ENCODE measurements at regions of chr1 and their contacts with region 1.

Region 1: GRCh38 chr1:2429780-2430591 is 17.6 kb upstream of the PEX10 start:
- ATAC-seq: peak in 1 of 8 experiments; percentile 34
- H3K4me3 ChIP-seq: no peak overlapping the region
- H3K27ac ChIP-seq: no peak overlapping the region
- H3K4me1 ChIP-seq: peaks cover 57 to 60% of the 10 kb centered on the region in 2 donors

Region 2: GRCh38 chr1:1906185-1907097 is 523.5 kb before region 1 on chr1:
- in situ Hi-C with region 1: no loop called
- ATAC-seq: peak; percentile 62 to 86 (median 76)
- H3K4me3 ChIP-seq: no peak overlapping the region
- H3K27ac ChIP-seq: peak overlapping the region; percentile 68 to 82
- H3K4me1 ChIP-seq: peaks cover 27 to 31% of the 10 kb centered on the region in 2 donors

Region 3: GRCh38 chr1:2545759-2546514 is 116.0 kb after region 1 on chr1:
- in situ Hi-C with region 1: loop called in 2 of 9 experiments (anchors 10 to 25 kb)
- ATAC-seq: peak; percentile 13 to 70 (median 40)
- H3K4me3 ChIP-seq: peak overlapping the region in 3 of 5 donors; percentile 16 to 31 (median 30)
- H3K27ac ChIP-seq: peak overlapping the region; percentile 84 to 94
- H3K4me1 ChIP-seq: peaks cover 80 to 88% of the 10 kb centered on the region in 2 donors

Region 4: GRCh38 chr1:3577300-3577699 is 1147.3 kb after region 1 on chr1:
- in situ Hi-C with region 1: no loop called
- ATAC-seq: peak in 5 of 8 experiments; percentile 28 to 80 (median 63)
- H3K4me3 ChIP-seq: no peak overlapping the region
- H3K27ac ChIP-seq: no peak overlapping the region
- H3K4me1 ChIP-seq: peaks cover 17 to 26% of the 10 kb centered on the region in 2 donors